Pancreas (tissue), 10 donors: ENCODE measurements at regions of chr1 and their contacts with region 1.

Region 1: DNA sequence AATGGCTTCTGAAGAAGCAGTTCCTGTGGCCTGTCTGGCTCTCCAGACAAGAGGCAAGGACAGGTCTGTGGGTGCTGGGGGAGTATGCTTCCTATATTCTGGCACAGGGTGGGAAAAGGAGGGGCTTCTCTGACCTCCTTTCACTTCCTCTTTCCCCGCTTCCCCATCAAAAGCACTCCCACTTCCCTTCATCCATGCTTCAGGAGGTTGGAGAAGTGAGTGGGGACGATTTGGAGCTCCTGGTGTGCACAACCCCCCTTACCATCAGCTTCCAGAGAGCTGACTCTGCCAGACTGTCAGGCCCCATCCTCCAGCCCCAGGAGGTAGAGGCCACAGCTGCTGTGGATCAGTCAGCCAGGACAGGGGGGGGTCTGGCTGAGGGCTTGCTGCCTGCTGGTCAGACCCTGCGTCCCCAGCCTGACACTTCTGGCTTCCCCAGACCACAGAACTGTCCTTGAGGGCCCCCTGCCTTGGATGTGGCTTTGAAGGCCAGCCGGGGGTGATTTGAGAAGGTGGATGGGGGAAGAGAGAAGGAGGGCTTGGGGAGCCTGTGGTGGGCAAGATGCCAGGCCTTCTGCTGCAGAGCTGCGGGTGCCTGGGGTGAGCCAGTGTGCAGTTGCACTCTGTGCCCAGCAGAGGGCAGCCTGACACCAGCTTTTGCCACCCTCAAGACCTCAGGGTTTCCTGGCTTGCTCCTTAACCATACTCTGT is 21.5 kb upstream of the TMEM222 start:
- DNase-seq: peak; percentile 65 to 92 (median 86)
- ATAC-seq: peak; percentile 88 to 95 (median 91)
- H3K4me3 ChIP-seq: no peak overlapping the region
- H3K27ac ChIP-seq: peak overlapping the region in 1 of 4 donors; percentile 21
- H3K4me1 ChIP-seq: no peaks in the 10 kb centered on the region
- H3K27me3 ChIP-seq: no peaks in the 10 kb centered on the region
- CTCF ChIP-seq: peak; percentile 97 to 99 (median 98)

Region 2: DNA sequence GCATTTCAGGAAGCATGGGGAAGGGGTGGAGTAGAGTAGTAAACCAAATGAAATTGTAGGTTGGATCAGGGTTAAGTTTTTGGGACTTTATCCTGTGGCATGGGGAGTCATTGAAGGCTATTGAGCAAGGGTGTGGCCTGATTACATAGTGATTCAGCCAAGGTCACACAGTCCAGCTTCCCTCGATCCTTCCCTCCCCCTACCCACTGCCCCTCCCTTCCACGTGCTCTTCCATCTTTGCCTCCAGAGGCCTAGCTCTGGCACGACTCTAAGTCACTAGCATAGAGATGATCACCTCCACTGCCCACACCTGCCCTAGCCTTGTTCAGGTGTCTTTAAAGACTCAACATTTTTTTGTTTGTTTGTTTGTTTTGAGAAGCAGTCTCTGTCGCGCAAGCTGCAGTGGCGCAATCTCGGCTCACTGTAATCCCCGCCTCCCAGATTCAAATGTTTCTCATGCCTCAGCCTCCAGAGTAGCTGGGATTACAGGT is 108.4 kb before region 1 on chr1:
- intact Hi-C with region 1: loop called in 1 of 3 experiments (anchors 10 kb)
- DNase-seq: no peak
- ATAC-seq: peak in 3 of 4 donors; percentile 70 to 72 (median 71)
- H3K4me3 ChIP-seq: no peak overlapping the region
- H3K27ac ChIP-seq: no peak overlapping the region
- H3K4me1 ChIP-seq: no peaks in the 10 kb centered on the region
- H3K27me3 ChIP-seq: no peaks in the 10 kb centered on the region
- CTCF ChIP-seq: no peak